CD4-positive, alpha-beta T cell (primary cell): ENCODE measurements at regions of chr1 and their contacts with region 1.

Region 1: DNA sequence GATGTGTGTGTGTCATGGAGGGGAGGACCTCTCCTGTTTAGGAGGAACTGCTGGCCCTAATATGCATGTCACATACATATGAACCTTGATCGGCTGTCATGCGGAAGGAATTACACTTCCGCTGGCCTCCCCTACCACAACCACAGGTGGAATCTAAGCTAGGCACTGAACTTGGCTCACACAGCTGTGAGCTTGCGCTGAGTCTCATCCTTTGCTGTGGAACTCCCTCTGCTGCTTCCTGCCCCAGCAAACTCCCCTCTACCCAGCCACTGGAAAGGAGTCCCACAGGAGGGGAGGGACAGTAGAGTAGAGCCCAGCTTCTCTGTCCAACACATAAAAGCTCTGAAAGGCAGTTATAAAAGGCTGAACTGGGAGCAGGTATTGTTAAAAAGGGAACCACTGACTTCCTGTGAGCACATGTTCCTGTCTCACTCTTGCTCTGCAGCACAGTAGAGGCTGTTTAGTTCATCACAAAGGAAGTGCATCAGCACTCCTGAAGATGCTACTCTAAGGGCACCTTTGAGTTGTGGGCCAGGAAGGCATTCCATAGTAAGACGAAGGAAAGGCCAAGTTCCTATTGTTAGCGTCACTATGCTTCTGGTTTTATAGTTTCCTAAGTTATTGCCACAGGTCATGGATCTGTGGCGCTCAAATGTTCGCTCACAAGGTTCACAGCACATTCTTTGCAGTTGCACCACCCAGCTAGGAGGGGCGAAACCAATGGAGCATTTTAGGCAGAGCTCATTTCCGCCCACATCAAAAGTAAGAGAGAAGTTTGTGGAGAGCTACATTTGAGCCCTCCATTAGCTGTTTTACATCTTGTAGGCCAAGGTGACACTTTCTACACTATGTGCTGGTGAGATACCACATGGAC is 17.7 kb upstream of the PTPRC start:
- DNase-seq: peak; percentile 43 to 89 (median 55)
- ATAC-seq: peak; percentile 78
- H3K4me3 ChIP-seq: peak overlapping the region; percentile 44
- H3K4me3 Mint-ChIP-seq: peak overlapping the region; percentile 74
- H3K27ac ChIP-seq: peak overlapping the region; percentile 83 to 84
- H3K27ac Mint-ChIP-seq: peak overlapping the region; percentile 90
- H3K4me1 ChIP-seq: peaks cover 59% of the 10 kb centered on the region
- H3K4me1 Mint-ChIP-seq: peaks cover 77% of the 10 kb centered on the region
- H3K27me3 ChIP-seq: no peaks in the 10 kb centered on the region
- H3K27me3 Mint-ChIP-seq: no peaks in the 10 kb centered on the region
- CTCF ChIP-seq: no peak

Region 2: GRCh38 chr1:198528376-198528775 is 92.8 kb before region 1 on chr1:
- CTCF ChIA-PET with region 1: interaction called, 3 read pairs
- POLR2A ChIA-PET with region 1: interaction called, 39 read pairs
- intact Hi-C with region 1: loop called in 1 of 2 experiments (anchors 2 kb)
- DNase-seq: no peak
- ATAC-seq: no peak
- H3K4me3 ChIP-seq: no peak overlapping the region
- H3K4me3 Mint-ChIP-seq: no peak overlapping the region
- H3K27ac ChIP-seq: no peak overlapping the region
- H3K27ac Mint-ChIP-seq: no peak overlapping the region
- H3K4me1 ChIP-seq: peaks cover 4% of the 10 kb centered on the region
- H3K4me1 Mint-ChIP-seq: peaks cover 70% of the 10 kb centered on the region
- H3K27me3 ChIP-seq: no peaks in the 10 kb centered on the region
- H3K27me3 Mint-ChIP-seq: no peaks in the 10 kb centered on the region
- CTCF ChIP-seq: no peak

Region 3: GRCh38 chr1:198556971-198557370 is 64.2 kb before region 1 on chr1:
- CTCF ChIA-PET with region 1: no interaction called
- POLR2A ChIA-PET with region 1: interaction called, 19 read pairs
- intact Hi-C with region 1: no loop called
- DNase-seq: peak; percentile 15 to 96 (median 53)
- ATAC-seq: peak; percentile 92
- H3K4me3 ChIP-seq: peak overlapping the region; percentile 9
- H3K4me3 Mint-ChIP-seq: peak overlapping the region; percentile 71
- H3K27ac ChIP-seq: peak overlapping the region in 1 of 2 donors; percentile 1
- H3K27ac Mint-ChIP-seq: peak overlapping the region; percentile 40
- H3K4me1 ChIP-seq: peaks cover 32% of the 10 kb centered on the region
- H3K4me1 Mint-ChIP-seq: peaks cover 91% of the 10 kb centered on the region
- H3K27me3 ChIP-seq: no peaks in the 10 kb centered on the region
- H3K27me3 Mint-ChIP-seq: no peaks in the 10 kb centered on the region
- CTCF ChIP-seq: no peak

Region 4: GRCh38 chr1:198606020-198606438 is 15.2 kb before region 1 on chr1:
- CTCF ChIA-PET with region 1: interaction called, 6 read pairs
- POLR2A ChIA-PET with region 1: interaction called, 121 read pairs
- intact Hi-C with region 1: no loop called
- DNase-seq: no peak
- ATAC-seq: no peak
- H3K4me3 ChIP-seq: no peak overlapping the region
- H3K4me3 Mint-ChIP-seq: no peak overlapping the region
- H3K27ac ChIP-seq: no peak overlapping the region
- H3K27ac Mint-ChIP-seq: peak overlapping the region; percentile 76
- H3K4me1 ChIP-seq: peaks cover 29% of the 10 kb centered on the region
- H3K4me1 Mint-ChIP-seq: peaks cover 71% of the 10 kb centered on the region
- H3K27me3 ChIP-seq: no peaks in the 10 kb centered on the region
- H3K27me3 Mint-ChIP-seq: no peaks in the 10 kb centered on the region
- CTCF ChIP-seq: no peak

Region 5: GRCh38 chr1:198651650-198652400 is 30.6 kb after region 1 on chr1:
- CTCF ChIA-PET with region 1: interaction called, 19 read pairs
- POLR2A ChIA-PET with region 1: interaction called, 148 read pairs
- intact Hi-C with region 1: loop called in 1 of 2 experiments (anchors 2 kb)
- DNase-seq: peak in 1 of 14 experiments; percentile 46
- ATAC-seq: no peak
- H3K4me3 ChIP-seq: peak overlapping the region; percentile 79
- H3K4me3 Mint-ChIP-seq: peak overlapping the region; percentile 83
- H3K27ac ChIP-seq: peak overlapping the region; percentile 81 to 85
- H3K27ac Mint-ChIP-seq: peak overlapping the region; percentile 90
- H3K4me1 ChIP-seq: peaks cover 24% of the 10 kb centered on the region
- H3K4me1 Mint-ChIP-seq: peaks cover 76% of the 10 kb centered on the region
- H3K27me3 ChIP-seq: no peaks in the 10 kb centered on the region
- H3K27me3 Mint-ChIP-seq: no peaks in the 10 kb centered on the region
- CTCF ChIP-seq: no peak

Region 6: GRCh38 chr1:198669023-198669698 is 48.0 kb after region 1 on chr1:
- CTCF ChIA-PET with region 1: interaction called, 5 read pairs
- POLR2A ChIA-PET with region 1: interaction called, 61 read pairs
- intact Hi-C with region 1: no loop called
- DNase-seq: peak in 6 of 14 experiments; percentile 29 to 83 (median 66)
- ATAC-seq: peak; percentile 72
- H3K4me3 ChIP-seq: no peak overlapping the region
- H3K4me3 Mint-ChIP-seq: peak overlapping the region; percentile 72
- H3K27ac ChIP-seq: peak overlapping the region; percentile 61 to 66
- H3K27ac Mint-ChIP-seq: peak overlapping the region; percentile 100
- H3K4me1 ChIP-seq: peaks cover 52% of the 10 kb centered on the region
- H3K4me1 Mint-ChIP-seq: peaks cover 98% of the 10 kb centered on the region
- H3K27me3 ChIP-seq: no peaks in the 10 kb centered on the region
- H3K27me3 Mint-ChIP-seq: no peaks in the 10 kb centered on the region
- CTCF ChIP-seq: no peak

Region 7: GRCh38 chr1:199129224-199129623 is 508.0 kb after region 1 on chr1:
- CTCF ChIA-PET with region 1: no interaction called
- POLR2A ChIA-PET with region 1: no interaction called
- intact Hi-C with region 1: no loop called
- DNase-seq: no peak
- ATAC-seq: no peak
- H3K4me3 ChIP-seq: no peak overlapping the region
- H3K4me3 Mint-ChIP-seq: no peak overlapping the region
- H3K27ac ChIP-seq: no peak overlapping the region
- H3K27ac Mint-ChIP-seq: no peak overlapping the region
- H3K4me1 ChIP-seq: no peaks in the 10 kb centered on the region
- H3K4me1 Mint-ChIP-seq: no peaks in the 10 kb centered on the region
- H3K27me3 ChIP-seq: no peaks in the 10 kb centered on the region
- H3K27me3 Mint-ChIP-seq: no peaks in the 10 kb centered on the region
- CTCF ChIP-seq: no peak